Activated CD8-positive, alpha-beta T cell treated with anti-CD3 and anti-CD28 coated beads for 36 hours (primary cell): ENCODE measurements at regions of chr10 and their contacts with region 1.

Region 1: GRCh38 chr10:79463578-79464496 is 18.4 kb upstream of the ZCCHC24 start:
- DNase-seq: no peak
- ATAC-seq: no peak
- H3K4me3 Mint-ChIP-seq: no peak overlapping the region
- H3K27ac Mint-ChIP-seq: no peak overlapping the region
- H3K4me1 Mint-ChIP-seq: no peaks in the 10 kb centered on the region
- H3K27me3 Mint-ChIP-seq: peaks cover 2% of the 10 kb centered on the region
- CTCF ChIP-seq: no peak

Region 2: GRCh38 chr10:79390551-79391209 is 73.2 kb before region 1 on chr10:
- CTCF ChIA-PET with region 1: interaction called, 17 read pairs
- POLR2A ChIA-PET with region 1: no interaction called
- intact Hi-C with region 1: no loop called
- DNase-seq: peak; percentile 41
- ATAC-seq: peak; percentile 41
- H3K4me3 Mint-ChIP-seq: no peak overlapping the region
- H3K27ac Mint-ChIP-seq: no peak overlapping the region
- H3K4me1 Mint-ChIP-seq: peaks cover 7% of the 10 kb centered on the region
- H3K27me3 Mint-ChIP-seq: no peaks in the 10 kb centered on the region
- CTCF ChIP-seq: no peak

Region 3: GRCh38 chr10:79400146-79401004 is 63.5 kb before region 1 on chr10:
- CTCF ChIA-PET with region 1: interaction called, 10 read pairs
- POLR2A ChIA-PET with region 1: no interaction called
- intact Hi-C with region 1: loop called (anchors 2 kb)
- DNase-seq: peak; percentile 83
- ATAC-seq: peak; percentile 89
- H3K4me3 Mint-ChIP-seq: no peak overlapping the region
- H3K27ac Mint-ChIP-seq: no peak overlapping the region
- H3K4me1 Mint-ChIP-seq: no peaks in the 10 kb centered on the region
- H3K27me3 Mint-ChIP-seq: no peaks in the 10 kb centered on the region
- CTCF ChIP-seq: peak; percentile 70

Region 4: DNA sequence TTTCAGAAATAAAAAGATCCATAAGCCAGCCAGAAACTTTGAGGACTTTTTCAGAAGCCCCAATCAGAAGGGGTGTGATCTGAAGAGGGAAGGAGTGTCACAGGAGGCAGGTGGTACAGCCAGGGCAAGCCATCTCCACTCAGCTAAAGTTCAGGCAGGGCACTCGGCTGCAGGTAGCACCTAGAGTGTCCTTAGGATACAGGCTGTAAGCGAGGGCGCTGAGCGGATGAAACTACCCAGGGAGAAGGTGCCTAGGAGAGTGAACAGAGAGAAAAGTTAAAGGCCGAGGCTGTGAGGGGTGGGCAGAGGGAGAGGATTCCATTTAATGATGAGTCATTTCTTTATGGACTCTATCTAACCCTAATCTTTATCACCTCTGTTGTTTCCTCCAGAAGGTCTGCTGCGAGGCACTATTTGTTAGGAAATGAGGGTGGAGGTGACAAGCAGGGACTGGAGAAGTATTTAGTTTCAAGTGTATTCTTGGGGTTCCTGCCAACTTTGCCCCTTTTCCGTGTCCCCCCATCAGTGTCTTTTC is 11.3 kb after region 1 on chr10:
- CTCF ChIA-PET with region 1: interaction called, 24 read pairs
- POLR2A ChIA-PET with region 1: interaction called, 3 read pairs
- intact Hi-C with region 1: no loop called
- DNase-seq: no peak
- ATAC-seq: no peak
- H3K4me3 Mint-ChIP-seq: no peak overlapping the region
- H3K27ac Mint-ChIP-seq: no peak overlapping the region
- H3K4me1 Mint-ChIP-seq: no peaks in the 10 kb centered on the region
- H3K27me3 Mint-ChIP-seq: peaks cover 10% of the 10 kb centered on the region
- CTCF ChIP-seq: no peak